Endothelial cell of umbilical vein (primary cell): ENCODE measurements at regions of chr12 and their contacts with region 1.

Region 1: GRCh38 chr12:95582230-95583058 is 31.2 kb upstream of the USP44 start:
- DNase-seq: peak; percentile 86
- H3K4me3 ChIP-seq: no peak overlapping the region
- H3K27ac ChIP-seq: no peak overlapping the region
- H3K4me1 ChIP-seq: no peaks in the 10 kb centered on the region
- H3K27me3 ChIP-seq: no peaks in the 10 kb centered on the region
- CTCF ChIP-seq: peak; percentile 40 to 48
- POLR2A ChIP-seq: no peak

Region 2: DNA sequence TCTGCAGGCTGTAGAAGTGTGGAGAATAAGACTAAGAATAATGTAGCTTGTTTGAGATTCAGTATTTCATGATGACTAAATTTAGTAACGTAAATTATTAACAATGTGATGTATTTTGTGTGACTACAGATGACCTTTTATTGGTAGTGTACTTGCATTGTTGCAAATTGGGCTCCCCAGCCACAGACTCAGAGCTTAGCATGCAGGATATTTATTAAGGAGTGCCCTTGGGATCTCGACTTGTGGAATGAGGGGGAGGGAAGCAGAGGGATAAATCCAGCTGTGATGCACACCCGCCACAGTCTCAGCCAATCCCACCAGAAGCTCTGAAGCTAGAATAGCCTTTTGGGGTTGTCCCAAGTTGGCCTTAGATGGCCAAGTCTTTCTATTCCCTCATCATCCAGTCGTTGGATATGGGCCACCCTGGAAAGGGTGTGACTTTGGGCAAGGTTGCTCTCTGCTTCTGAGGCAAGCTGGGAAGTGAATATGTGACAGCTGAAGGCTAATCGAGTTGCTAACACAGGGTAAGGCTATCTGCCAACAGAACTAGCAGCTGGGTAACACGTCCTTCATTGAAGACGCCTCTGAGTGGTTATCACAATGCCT is 10.9 kb after region 1 on chr12:
- CTCF ChIA-PET with region 1: interaction called, 13 read pairs
- POLR2A ChIA-PET with region 1: no interaction called
- dilution Hi-C with region 1: no loop called
- intact Hi-C with region 1: no loop called
- DNase-seq: no peak
- H3K4me3 ChIP-seq: no peak overlapping the region
- H3K27ac ChIP-seq: no peak overlapping the region
- H3K4me1 ChIP-seq: no peaks in the 10 kb centered on the region
- H3K27me3 ChIP-seq: no peaks in the 10 kb centered on the region
- CTCF ChIP-seq: no peak
- POLR2A ChIP-seq: no peak

Region 3: DNA sequence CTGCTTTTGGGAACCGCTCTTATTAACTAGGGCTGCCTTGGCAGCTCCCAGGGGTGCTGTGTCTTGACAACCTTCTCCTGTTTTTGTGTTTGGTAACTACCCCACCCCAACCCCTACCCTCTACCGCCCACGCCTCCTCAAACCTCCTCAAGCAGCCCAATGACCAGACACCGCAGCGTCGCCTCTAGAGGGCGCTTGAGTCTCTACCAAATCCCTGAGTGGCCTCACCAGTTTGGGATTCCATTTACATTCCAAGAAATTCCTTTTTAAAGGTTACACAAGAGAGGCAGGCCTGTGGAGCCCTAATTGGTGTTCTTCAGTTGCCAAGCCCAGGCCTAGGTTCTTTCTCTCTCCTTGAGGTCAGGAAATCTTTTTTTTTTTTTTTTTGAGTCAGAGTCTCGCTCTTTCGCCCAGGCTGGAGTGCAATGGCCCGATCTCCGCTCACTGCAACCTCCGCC is 41.2 kb after region 1 on chr12:
- CTCF ChIA-PET with region 1: interaction called, 3 read pairs
- POLR2A ChIA-PET with region 1: no interaction called
- dilution Hi-C with region 1: no loop called
- intact Hi-C with region 1: loop called (anchors 1 kb)
- DNase-seq: peak; percentile 88
- H3K4me3 ChIP-seq: no peak overlapping the region
- H3K27ac ChIP-seq: peak overlapping the region; percentile 98
- H3K4me1 ChIP-seq: peaks cover 16% of the 10 kb centered on the region
- H3K27me3 ChIP-seq: no peaks in the 10 kb centered on the region
- CTCF ChIP-seq: peak; percentile 73 to 83
- POLR2A ChIP-seq: no peak

Region 4: GRCh38 chr12:95721350-95721749 is 138.9 kb after region 1 on chr12:
- CTCF ChIA-PET with region 1: interaction called, 11 read pairs
- POLR2A ChIA-PET with region 1: no interaction called
- dilution Hi-C with region 1: no loop called
- intact Hi-C with region 1: loop called (anchors 5 kb)
- DNase-seq: no peak
- H3K4me3 ChIP-seq: no peak overlapping the region
- H3K27ac ChIP-seq: no peak overlapping the region
- H3K4me1 ChIP-seq: peaks cover 13% of the 10 kb centered on the region
- H3K27me3 ChIP-seq: no peaks in the 10 kb centered on the region
- CTCF ChIP-seq: peak in 1 of 2 donors; percentile 9
- POLR2A ChIP-seq: no peak

Region 5: GRCh38 chr12:95820102-95820703 is 237.8 kb after region 1 on chr12:
- CTCF ChIA-PET with region 1: interaction called, 40 read pairs
- POLR2A ChIA-PET with region 1: no interaction called
- dilution Hi-C with region 1: no loop called
- intact Hi-C with region 1: loop called (anchors 1 kb)
- DNase-seq: peak; percentile 75
- H3K4me3 ChIP-seq: no peak overlapping the region
- H3K27ac ChIP-seq: no peak overlapping the region
- H3K4me1 ChIP-seq: no peaks in the 10 kb centered on the region
- H3K27me3 ChIP-seq: no peaks in the 10 kb centered on the region
- CTCF ChIP-seq: peak; percentile 51 to 61
- POLR2A ChIP-seq: no peak

Region 6: DNA sequence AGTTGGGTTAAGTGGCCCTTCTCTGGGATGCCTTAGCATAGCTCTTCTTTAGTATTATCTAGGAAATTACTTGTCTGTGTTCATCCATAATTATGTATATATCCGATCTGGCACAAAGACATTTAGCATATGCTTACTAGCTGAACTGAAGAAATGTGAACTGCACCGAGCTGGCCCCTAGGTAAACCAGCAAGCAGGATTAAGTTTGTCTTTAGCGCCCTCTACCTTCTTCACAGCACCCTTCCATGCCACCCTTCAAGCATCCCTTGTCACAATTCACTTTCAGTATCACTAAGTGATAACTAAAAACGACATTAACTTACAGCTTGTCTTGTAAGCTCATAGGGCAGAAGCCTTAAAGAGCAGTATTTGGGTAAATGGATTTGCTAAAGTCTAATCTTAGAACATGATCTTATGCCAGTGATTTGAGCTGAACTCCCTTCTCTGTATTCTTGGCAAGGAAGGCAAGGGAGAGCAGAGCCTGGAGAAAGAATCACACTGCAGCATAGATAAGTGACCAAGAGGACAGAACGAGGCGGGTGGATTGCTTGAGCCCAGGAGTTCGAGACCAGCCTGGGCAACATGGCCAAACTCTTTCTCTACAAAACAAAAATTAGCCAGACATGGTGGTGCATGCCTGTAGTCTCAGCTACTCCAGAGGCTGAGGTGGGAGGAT is 416.3 kb after region 1 on chr12:
- CTCF ChIA-PET with region 1: interaction called, 17 read pairs
- POLR2A ChIA-PET with region 1: no interaction called
- dilution Hi-C with region 1: no loop called
- intact Hi-C with region 1: loop called (anchors 2 kb)
- DNase-seq: peak; percentile 68
- H3K4me3 ChIP-seq: no peak overlapping the region
- H3K27ac ChIP-seq: no peak overlapping the region
- H3K4me1 ChIP-seq: no peaks in the 10 kb centered on the region
- H3K27me3 ChIP-seq: no peaks in the 10 kb centered on the region
- CTCF ChIP-seq: peak; percentile 56 to 58
- POLR2A ChIP-seq: no peak